ENCODE measurements at regions of chr3 and their contacts with region 1.

Region 1: GRCh38 chr3:123028233-123028828 is 768 bp upstream of the SEMA5B start:
- DNase-seq: peak; percentile 82
- CTCF ChIP-seq: peak; percentile 61

Region 2: DNA sequence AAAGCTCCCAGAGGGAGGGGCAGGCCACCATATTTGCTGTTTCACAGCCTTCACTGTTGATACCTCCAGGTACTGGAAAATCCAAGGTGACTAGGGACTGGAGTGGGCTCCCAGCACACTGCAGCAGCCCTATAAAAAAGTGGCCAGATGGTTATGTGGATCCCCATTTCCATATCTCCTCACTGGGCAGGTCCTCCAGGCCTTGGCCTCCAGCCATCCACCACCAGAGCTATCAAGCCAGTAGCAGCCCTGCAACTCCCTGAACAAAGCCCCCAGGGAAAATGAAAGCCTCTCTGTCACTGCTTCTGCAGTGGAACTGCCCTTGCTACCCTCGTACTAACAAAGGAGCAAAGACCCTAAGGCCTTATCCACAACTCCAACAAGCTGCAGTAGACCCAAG is 1064.7 kb before region 1 on chr3:
- in situ Hi-C with region 1: no loop called
- DNase-seq: no peak
- CTCF ChIP-seq: no peak

Region 3: GRCh38 chr3:122564155-122564912 is 464.0 kb before region 1 on chr3 and contains the starts of genes DTX3L and PARP9:
- in situ Hi-C with region 1: loop called (anchors 25 kb)
- DNase-seq: peak; percentile 73
- CTCF ChIP-seq: no peak

Region 4: DNA sequence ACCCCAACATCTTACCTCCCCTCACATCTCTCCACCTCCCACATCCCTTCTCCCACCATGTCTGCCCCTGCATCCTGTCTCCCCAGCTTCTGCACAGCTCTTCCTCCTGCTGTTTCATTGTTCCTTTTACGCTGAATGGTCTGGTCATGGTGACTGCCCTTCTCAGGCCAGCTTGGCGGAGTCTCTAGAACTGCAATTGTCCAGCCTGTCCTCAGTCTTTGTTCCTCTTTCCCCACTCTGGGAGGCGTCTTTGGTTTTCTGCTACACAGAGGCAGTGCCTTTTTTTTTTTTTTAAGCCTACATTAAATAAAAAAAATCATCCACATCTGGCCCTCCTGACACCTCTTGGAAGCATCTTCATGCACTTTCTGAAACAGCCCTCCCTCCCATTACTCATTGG is 124.4 kb after region 1 on chr3:
- in situ Hi-C with region 1: no loop called
- DNase-seq: no peak
- CTCF ChIP-seq: no peak

Region 5: DNA sequence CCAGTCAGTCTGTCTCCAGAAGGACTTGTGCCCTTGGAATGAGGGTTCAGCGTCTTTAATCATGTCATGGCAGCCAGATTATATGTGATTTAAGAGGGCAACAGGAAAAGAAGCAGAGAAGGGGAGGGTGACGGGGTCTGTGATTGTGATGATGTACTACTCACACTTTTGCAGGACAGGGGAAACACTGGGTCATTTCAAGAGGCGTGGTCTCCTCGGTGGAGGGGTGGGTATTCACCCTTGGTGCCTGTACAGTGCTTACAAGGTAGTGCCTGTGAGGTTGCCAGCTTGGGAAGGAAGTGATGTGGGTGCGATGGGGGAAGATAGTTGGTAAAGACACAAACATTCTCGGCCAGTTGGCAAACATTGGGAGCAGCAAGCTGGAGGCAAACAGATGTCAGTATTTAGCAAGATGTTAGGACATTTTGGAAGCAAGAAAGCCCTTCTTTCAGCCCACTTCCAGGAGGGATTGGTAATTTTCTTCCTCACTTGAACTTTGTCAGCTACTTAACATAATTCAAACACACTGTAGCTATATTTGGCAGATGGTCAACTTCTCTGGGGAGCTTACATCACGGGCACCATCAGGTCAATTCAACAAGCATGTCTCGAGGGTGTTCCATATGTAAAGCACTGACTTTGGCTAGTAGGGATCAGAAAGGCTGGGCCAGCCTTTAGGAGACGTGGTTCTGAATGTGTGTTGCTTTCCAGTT is 1035.0 kb after region 1 on chr3:
- in situ Hi-C with region 1: no loop called
- DNase-seq: no peak
- CTCF ChIP-seq: no peak